Tibial artery (tissue), 4 donors: ENCODE measurements at regions of chr19 and their contacts with region 1.

Region 1: DNA sequence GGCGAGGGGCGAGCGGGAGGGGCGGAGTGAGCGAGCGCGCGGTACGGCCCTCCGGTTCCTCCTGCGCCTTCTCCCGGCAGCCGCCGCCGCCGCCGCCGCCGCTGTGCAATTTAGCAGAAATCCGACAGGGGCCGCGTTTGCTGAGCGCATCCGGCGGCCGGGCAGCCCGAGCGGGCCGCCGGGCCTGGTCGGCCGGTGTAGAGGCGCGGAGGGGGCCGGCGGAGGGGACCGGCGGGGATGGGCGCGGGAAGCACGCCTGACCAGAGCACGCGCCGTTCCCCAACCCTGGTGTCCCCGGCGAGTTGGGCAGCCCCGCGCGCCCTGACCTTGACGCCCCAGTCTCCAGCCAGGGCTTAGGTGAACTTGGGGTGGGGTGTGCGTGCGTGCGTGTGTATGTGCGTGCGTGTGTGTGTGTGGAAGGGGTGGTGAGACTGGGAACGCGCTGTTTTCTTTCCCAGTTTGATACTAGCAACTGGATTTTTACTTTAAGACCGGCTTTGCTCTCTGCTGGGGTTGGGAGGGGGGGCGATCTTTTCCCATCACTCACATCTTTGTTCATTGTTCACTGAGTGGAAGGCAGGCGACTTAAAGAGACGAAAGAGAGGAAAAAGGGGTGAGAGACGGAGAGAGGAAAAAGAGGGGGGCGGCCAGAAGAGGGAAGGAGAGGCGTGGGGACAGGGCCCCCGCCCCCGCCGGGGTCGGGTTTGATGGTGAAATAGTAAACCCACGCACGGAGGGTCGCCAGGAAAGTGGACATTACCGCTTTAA is 144.3 kb upstream of the ZNF536 start:
- DNase-seq: peak in 1 of 2 donors; percentile 37
- H3K4me3 ChIP-seq: peak overlapping the region; percentile 53 to 72
- H3K27ac ChIP-seq: peak overlapping the region in 1 of 2 donors; percentile 13
- H3K4me1 ChIP-seq: peaks cover 0 to 45% (median 38%) of the 10 kb centered on the region in 4 donors
- H3K27me3 ChIP-seq: peaks cover 0 to 88% of the 10 kb centered on the region in 2 donors
- CTCF ChIP-seq: peak; percentile 29 to 44

Region 2: DNA sequence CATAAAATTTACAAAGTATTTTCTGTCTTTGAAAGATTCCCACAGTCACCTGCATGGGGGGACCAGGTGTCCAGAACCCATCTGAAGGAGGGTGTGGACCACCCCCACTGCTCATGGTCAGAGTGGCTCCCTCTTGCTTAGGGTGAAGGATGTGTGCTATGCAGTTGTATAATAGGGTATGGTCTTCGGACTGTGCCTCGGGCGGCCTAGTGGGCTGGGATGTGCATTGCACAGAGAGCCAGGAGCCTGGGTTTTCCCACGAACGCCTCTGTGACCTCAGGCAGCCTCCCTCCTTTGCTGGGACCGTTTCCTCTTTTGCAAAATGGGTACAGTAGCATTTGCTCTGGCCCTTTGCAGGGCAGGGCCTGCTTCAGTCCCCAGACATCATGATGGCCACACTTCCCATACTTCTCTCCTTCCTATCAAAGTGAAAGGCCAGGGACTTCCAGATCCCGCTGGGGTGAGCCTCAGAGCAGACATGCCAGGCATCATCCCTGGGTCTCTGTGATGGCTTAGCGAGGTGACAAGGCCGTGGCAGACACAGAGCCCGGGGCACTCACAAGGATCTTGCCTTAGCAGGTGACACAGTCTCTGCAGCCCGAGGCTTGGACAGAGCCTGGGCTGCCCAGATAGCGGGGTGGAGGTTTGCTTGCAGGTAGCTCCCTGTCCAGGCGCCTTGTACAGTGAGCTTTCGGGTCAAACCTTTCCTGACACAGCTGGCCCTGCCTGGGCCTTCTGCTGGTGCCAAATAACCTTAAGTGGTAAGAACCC is 84.9 kb after region 1 on chr19:
- intact Hi-C with region 1: no loop called
- DNase-seq: no peak
- H3K4me3 ChIP-seq: no peak overlapping the region
- H3K27ac ChIP-seq: no peak overlapping the region
- H3K4me1 ChIP-seq: no peaks in the 10 kb centered on the region
- H3K27me3 ChIP-seq: no peaks in the 10 kb centered on the region
- CTCF ChIP-seq: no peak

Region 3: DNA sequence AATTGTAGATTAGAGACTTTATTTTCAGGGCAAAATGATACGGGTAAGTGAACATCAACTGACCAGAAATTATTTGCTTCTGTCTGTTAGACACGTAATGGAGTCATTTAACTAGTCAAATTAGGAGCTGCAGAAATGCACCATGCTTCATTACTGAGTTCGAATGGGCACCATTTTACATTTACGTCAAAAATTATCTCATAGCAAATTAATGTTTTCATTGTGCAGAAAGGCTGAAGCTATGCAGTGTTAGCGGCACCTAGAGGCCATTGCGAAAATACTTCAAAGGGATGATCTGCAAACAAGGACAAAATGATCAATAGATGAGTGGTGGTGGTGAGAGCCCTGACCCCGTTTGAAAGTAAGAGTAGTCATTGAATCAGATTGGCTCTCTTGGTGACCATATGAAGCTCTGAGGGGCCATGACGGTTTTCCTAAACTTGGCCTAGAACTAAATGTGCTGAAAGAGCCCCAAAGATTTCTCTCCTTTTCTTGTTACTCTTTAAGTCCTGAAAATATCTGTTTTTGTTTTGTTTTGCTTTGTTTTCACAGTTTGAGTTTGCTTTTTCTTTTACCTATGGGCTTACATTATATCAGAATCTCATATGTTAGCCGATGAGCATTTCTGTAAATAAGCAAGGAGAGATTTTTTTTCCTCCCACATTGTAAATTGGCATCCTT is 422.2 kb after region 1 on chr19:
- intact Hi-C with region 1: loop called (anchors 10 kb)
- DNase-seq: no peak
- H3K4me3 ChIP-seq: no peak overlapping the region
- H3K27ac ChIP-seq: no peak overlapping the region
- H3K4me1 ChIP-seq: no peaks in the 10 kb centered on the region
- H3K27me3 ChIP-seq: peaks cover 0 to 37% of the 10 kb centered on the region in 2 donors
- CTCF ChIP-seq: peak; percentile 31 to 51